ENCODE measurements at regions of chr9 and their contacts with region 1.

Region 1: GRCh38 chr9:69168709-69169217 is 5.3 kb upstream of the TJP2 start:
- DNase-seq: peak; percentile 90
- H3K4me3 Mint-ChIP-seq: peak overlapping the region; percentile 74
- H3K27ac Mint-ChIP-seq: peak overlapping the region; percentile 74
- H3K4me1 Mint-ChIP-seq: peaks cover 23% of the 10 kb centered on the region
- H3K27me3 Mint-ChIP-seq: peaks cover 26% of the 10 kb centered on the region

Region 2: GRCh38 chr9:68783554-68783953 is 385.2 kb before region 1 on chr9:
- CTCF ChIA-PET with region 1: no interaction called
- POLR2A ChIA-PET with region 1: no interaction called
- intact Hi-C with region 1: no loop called
- DNase-seq: no peak
- H3K4me3 Mint-ChIP-seq: no peak overlapping the region
- H3K27ac Mint-ChIP-seq: no peak overlapping the region
- H3K4me1 Mint-ChIP-seq: peaks cover 8% of the 10 kb centered on the region
- H3K27me3 Mint-ChIP-seq: no peaks in the 10 kb centered on the region

Region 3: DNA sequence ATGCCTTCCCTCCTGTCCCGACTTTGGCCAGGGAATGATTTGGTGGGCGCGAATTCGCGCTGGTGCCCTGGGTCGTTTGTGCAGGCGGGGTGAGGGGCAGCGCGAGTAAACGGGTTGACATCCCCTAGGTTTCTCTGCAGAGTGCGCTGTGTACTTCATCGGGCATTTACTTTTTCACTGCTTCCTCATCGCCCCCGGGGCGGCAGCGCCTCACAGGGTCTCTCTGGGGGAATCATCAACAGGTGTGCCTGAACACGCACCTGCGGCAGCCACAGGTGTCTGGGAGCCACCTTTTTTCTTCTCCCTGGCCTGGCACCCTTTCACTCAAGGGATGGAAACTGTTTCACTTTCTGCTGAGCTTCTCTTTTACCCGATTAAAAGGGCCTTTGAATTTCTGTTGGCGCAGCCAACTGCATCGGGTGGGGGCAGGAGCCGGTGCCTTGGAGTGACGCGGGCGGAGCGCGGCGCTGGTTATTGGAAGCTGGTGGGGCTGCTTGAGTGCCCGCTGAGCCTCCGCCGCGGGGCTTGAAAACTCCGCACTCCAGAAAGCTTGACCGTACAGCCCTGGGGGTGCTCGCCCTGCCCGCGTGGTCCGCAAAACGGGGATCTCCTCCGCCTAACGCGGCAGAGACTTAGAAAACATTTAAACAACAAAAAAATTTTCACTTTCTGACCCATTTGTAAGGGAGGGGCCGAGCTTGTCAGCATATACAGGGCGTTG is 46.8 kb before region 1 on chr9:
- CTCF ChIA-PET with region 1: interaction called, 3 read pairs
- POLR2A ChIA-PET with region 1: no interaction called
- intact Hi-C with region 1: loop called (anchors 2 kb)
- DNase-seq: peak; percentile 58
- H3K4me3 Mint-ChIP-seq: peak overlapping the region; percentile 88
- H3K27ac Mint-ChIP-seq: no peak overlapping the region
- H3K4me1 Mint-ChIP-seq: peaks cover 7% of the 10 kb centered on the region
- H3K27me3 Mint-ChIP-seq: peaks cover 2% of the 10 kb centered on the region

Region 4: DNA sequence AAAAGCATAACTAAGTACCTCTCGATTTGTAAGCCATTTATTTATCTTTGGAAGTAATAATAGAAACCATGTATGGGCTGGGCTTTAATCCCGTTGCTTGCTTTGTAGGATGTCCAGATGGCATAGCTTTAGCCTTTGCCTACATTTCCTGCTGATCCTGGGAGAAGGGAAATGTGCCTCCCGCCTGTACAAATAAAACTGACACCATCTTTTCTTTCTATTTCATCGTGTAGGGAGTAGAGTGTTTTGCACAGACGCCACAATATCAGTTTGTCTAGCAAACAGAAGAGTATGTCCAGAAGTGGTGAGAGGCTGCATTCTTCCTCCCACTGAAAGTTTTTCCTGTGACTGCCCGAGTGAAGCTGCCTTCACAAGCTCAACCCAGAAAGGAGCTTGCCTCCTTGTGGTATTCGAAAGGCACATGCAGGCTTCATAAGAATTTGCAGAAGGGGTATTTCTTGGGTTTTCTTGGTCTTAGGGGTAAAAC is 19.4 kb before region 1 on chr9:
- CTCF ChIA-PET with region 1: no interaction called
- POLR2A ChIA-PET with region 1: no interaction called
- intact Hi-C with region 1: no loop called
- DNase-seq: no peak
- H3K4me3 Mint-ChIP-seq: no peak overlapping the region
- H3K27ac Mint-ChIP-seq: no peak overlapping the region
- H3K4me1 Mint-ChIP-seq: no peaks in the 10 kb centered on the region
- H3K27me3 Mint-ChIP-seq: no peaks in the 10 kb centered on the region

Region 5: DNA sequence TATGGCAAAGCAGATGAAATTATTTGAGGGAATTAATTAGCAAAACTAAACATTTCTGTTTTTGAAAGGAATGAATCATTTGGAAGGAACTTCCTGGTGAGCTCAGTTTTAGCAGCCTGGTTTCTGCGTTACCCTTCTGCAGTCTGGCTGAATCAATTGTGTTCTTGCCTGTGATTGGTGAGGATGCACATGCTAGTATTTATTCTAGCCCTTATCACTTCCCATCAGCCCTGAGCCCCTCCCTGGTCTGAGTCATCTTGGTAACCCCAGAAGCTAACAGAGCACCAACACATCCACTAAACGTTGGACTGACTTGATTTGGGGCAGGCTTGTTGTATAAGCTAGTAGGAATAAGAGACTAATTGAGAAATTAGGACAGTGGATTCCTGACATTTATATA is 11.9 kb after region 1 on chr9:
- CTCF ChIA-PET with region 1: no interaction called
- POLR2A ChIA-PET with region 1: interaction called, 8 read pairs
- intact Hi-C with region 1: loop called (anchors 1 kb)
- DNase-seq: peak; percentile 79
- H3K4me3 Mint-ChIP-seq: no peak overlapping the region
- H3K27ac Mint-ChIP-seq: peak overlapping the region; percentile 23
- H3K4me1 Mint-ChIP-seq: peaks cover 51% of the 10 kb centered on the region
- H3K27me3 Mint-ChIP-seq: peaks cover 5% of the 10 kb centered on the region